Colonic mucosa (tissue), 4 donors: ENCODE measurements at regions of chr5 and their contacts with region 1.

Region 1: DNA sequence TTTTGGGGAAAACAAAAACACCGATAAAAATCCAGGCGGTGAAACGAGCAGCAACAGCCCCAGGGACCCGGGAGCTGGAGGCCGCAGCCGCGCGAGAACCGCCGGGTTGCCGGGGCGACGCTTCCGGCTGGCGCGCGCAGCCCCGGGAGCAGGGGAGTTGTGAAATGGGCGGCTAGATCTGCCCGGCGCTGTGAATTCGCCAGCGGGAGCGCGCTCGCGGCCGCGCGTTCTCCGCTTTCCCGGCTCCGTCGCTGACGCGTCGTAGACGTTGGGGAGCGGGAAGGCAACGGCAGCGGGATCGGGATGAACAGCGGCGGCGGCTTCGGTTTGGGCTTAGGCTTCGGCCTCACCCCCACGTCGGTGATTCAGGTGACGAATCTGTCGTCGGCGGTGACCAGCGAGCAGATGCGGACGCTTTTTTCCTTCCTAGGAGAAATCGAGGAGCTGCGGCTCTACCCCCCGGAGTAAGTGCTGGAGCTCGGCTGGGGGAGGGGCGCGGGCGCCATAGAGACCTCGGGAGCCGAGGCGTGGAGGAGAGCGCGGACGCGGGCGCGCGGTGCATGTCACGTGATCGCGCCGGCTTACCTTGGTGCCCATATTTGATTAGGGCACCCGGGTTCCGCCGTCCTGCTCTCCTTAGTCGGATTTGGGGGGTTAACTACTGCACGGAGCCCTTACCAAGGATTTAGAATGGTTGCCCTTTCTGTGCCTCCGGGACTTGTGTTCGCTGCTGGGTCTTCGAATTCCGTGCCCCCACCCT is at the start of gene SREK1:
- DNase-seq: peak; percentile 92
- H3K4me3 ChIP-seq: peak within 1 kb of the TSS; percentile 68
- H3K27ac ChIP-seq: peak within 1 kb of the TSS; percentile 100
- H3K4me1 ChIP-seq: peaks cover 3% of the 10 kb centered on the region
- H3K27me3 ChIP-seq: no peaks in the 10 kb centered on the region
- CTCF ChIP-seq: no peak
- total RNA-seq, gene SREK1: 51.4 to 57.5 TPM

Region 2: DNA sequence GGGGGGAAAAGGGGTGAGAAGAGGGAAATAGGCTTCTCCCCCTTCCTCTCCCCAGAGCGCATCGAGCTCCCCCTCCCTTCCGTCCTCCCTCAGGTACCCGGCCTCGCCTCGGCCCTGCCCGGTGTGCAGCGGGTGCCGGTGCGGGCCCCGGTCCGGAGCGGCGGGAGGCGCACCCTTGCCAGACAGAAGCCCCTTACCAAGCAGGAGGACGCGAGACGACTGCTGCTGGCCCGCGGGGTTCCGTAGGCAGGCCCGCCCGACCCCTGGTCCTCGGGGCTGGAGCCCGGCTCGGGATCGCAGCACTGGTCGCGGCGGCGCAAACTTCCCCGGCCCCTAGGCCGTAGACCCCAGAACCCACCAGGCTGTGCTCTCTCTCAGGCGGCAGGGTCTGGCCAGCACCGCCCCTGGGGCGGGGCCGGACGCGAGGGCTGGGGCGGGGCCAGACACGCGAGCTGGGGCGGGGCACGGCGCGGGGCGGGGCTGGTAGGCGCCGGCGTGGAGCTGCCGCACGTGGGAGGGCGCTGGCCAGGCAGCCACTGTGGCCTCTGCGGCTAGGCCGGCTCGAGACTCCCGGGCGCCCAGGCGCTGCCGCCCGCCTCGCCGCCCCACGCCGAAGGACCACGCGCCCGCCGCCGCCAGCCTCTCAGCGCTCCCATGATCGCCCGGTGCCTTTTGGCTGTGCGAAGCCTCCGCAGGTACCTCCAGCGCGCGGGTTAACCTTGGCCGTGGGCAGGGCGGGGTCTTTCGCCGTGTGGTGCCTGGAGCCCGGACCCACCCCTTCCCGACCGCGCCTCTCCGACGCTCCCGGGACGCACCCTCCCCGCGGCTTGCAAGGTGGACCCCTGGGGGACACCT is 422.3 kb before region 1 on chr5 and contains the starts of genes NLN and SGTB:
- intact Hi-C with region 1: loop called (anchors 10 kb)
- DNase-seq: peak; percentile 91
- H3K4me3 ChIP-seq: peak within 1 kb of the TSS; percentile 99
- H3K27ac ChIP-seq: peak within 1 kb of the TSS; percentile 74
- H3K4me1 ChIP-seq: no peaks in the 10 kb centered on the region
- H3K27me3 ChIP-seq: no peaks in the 10 kb centered on the region
- CTCF ChIP-seq: no peak
- total RNA-seq, gene NLN: 13.7 to 24.6 TPM
- total RNA-seq, gene SGTB: 3.7 to 4.4 TPM

Region 3: GRCh38 chr5:66324357-66324756 is 180.1 kb after region 1 on chr5:
- intact Hi-C with region 1: no loop called
- DNase-seq: no peak
- H3K4me3 ChIP-seq: no peak overlapping the region
- H3K27ac ChIP-seq: no peak overlapping the region
- H3K4me1 ChIP-seq: no peaks in the 10 kb centered on the region
- H3K27me3 ChIP-seq: no peaks in the 10 kb centered on the region
- CTCF ChIP-seq: no peak

Region 4: DNA sequence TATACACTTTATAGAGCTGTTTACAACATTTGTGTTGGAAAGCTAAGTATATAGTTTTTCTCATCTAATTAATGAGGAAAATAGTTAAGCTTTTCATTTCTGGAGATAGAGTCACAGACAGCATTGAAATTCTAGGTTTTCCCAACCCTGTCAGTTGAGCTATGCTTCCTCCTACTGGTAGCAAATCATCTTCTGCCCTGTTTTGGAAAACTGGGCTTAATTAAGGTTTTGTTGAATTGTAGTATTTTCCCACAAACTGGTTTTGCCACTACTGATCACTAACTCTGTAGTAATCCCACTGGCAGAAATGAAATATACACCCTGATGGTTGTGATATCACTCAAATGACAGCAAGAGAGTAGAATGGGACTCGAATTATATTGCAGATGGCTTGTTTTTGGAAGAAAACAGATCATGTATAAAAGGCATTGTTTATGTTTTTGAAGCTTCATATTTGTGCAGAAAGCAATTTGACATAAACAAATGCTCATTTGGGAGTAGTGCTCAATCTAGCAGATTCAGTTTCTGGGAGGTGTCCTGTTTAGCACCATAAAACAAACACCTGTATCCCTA is 1005.8 kb after region 1 on chr5:
- intact Hi-C with region 1: no loop called
- DNase-seq: no peak
- H3K4me3 ChIP-seq: no peak overlapping the region
- H3K27ac ChIP-seq: no peak overlapping the region
- H3K4me1 ChIP-seq: no peaks in the 10 kb centered on the region
- H3K27me3 ChIP-seq: no peaks in the 10 kb centered on the region
- CTCF ChIP-seq: no peak